A673 (cell line): ENCODE measurements at regions of chr2 and their contacts with region 1.

Region 1: DNA sequence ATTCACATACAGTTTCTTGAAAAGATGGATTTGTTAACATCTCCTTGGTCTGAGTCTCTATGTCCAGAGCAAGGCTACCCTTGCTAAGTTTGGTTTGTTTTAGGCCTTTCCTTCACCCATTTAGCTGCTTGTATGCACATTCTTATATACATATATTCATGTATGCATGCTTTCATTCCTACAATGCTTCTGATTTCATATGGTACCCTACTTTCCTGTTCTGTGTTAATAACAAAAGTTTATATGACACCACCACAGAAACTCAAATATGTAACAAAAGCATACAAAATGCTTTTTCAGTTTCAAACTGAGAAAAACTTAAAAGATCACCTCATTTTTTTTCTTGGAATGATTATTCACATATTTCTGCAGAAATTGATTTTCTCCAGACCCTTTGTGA is 39.4 kb downstream of the OSGEPL1 start:
- DNase-seq: no peak
- H3K4me3 ChIP-seq: no peak overlapping the region
- H3K27ac ChIP-seq: no peak overlapping the region
- H3K4me1 ChIP-seq: no peaks in the 10 kb centered on the region
- H3K27me3 ChIP-seq: no peaks in the 10 kb centered on the region
- CTCF ChIP-seq: no peak

Region 2: DNA sequence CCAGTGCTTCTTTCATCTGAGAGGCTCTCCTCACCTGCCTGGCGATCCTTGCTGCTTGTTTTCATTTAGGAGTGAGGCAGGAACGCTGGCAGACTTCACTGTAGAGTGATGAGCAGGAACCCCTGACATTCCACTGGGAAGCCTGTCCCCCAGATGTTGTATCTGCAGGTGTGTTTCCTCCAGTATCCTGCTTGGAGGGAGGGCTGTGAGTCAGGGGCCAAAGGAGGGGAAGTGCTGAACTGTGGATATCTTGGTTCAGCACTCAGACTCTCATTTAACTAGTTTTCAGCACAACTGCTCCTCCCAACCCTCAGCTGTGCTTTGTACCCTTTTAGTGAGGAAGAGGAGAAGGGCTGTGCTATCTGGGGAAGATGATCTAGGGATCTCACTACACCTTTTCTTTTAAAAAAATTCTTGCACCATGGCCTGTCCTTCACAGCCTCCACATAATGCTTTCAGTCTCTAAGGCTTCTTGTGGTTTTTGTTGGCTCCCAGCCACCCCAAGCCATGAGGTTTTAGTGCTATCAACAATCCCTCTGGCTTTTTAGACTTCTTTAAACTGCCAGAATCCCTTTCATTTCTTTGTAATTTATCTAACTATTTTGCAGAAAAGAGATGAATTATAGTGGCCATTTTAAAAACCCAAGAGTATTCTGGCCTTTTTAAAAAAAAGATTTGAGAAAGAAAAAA is 37.5 kb before region 1 on chr2:
- CTCF ChIA-PET with region 1: no interaction called
- POLR2A ChIA-PET with region 1: interaction called, 15 read pairs
- intact Hi-C with region 1: no loop called
- DNase-seq: peak; percentile 33
- H3K4me3 ChIP-seq: no peak overlapping the region
- H3K27ac ChIP-seq: no peak overlapping the region
- H3K4me1 ChIP-seq: peaks cover 7% of the 10 kb centered on the region
- H3K27me3 ChIP-seq: no peaks in the 10 kb centered on the region
- CTCF ChIP-seq: no peak